Panc1 (cell line): ENCODE measurements at regions of chr5 and their contacts with region 1.

Region 1: GRCh38 chr5:54243473-54244080 is 66.8 kb downstream of the ARL15 start:
- DNase-seq: no peak
- ATAC-seq: no peak
- H3K4me3 ChIP-seq: no peak overlapping the region
- H3K27ac ChIP-seq: no peak overlapping the region
- H3K4me1 ChIP-seq: no peaks in the 10 kb centered on the region
- H3K27me3 ChIP-seq: no peaks in the 10 kb centered on the region
- CTCF ChIP-seq: peak; percentile 70; the same call in 1 of the 2 replicates

Region 2: DNA sequence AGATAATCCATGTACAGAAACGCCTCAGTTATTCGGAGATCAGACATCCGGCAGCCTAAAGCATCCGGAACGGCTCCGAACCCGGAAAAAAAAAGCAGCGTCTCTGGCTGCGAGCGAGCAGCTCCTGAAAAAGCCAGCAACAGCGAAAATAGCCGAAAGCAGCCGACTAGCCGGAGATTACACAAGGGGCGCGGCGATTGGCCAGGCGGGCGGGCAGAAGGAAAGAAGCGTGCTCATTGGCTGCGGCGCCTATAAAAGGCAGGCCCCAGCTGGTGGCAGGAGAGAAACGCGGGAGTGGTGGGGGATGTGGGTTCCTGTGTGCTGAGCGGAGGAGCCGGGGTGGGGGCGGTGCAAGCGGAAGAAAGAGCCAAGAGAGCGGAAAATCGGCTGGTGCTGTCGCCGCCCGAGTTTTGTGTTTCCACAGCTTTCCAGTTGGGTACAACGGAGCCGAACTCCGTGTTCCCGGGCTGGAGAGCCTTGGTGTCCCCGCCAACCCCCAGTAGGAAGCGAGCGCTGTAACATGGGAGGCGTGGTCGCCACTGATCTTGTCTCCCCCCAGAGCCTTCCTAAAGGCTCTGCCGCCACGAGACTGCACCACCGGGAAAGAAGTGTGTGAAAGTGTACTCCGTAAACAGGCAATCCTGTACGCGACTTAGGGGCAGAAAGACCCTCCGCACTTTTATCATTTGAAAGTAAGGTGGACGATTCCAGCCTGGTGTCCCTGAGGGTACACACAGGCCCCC is 67.0 kb after region 1 on chr5 and contains the start of gene ARL15:
- CTCF ChIA-PET with region 1: no interaction called
- POLR2A ChIA-PET with region 1: no interaction called
- in situ Hi-C with region 1: no loop called
- intact Hi-C with region 1: no loop called
- DNase-seq: peak; percentile 64
- ATAC-seq: peak; percentile 96
- H3K4me3 ChIP-seq: peak within 1 kb of the TSS; percentile 80 to 85
- H3K27ac ChIP-seq: peak within 1 kb of the TSS; percentile 84
- H3K4me1 ChIP-seq: peaks cover 13% of the 10 kb centered on the region
- H3K27me3 ChIP-seq: no peaks in the 10 kb centered on the region
- CTCF ChIP-seq: no peak
- total RNA-seq, gene ARL15: 16.5 TPM

Region 3: DNA sequence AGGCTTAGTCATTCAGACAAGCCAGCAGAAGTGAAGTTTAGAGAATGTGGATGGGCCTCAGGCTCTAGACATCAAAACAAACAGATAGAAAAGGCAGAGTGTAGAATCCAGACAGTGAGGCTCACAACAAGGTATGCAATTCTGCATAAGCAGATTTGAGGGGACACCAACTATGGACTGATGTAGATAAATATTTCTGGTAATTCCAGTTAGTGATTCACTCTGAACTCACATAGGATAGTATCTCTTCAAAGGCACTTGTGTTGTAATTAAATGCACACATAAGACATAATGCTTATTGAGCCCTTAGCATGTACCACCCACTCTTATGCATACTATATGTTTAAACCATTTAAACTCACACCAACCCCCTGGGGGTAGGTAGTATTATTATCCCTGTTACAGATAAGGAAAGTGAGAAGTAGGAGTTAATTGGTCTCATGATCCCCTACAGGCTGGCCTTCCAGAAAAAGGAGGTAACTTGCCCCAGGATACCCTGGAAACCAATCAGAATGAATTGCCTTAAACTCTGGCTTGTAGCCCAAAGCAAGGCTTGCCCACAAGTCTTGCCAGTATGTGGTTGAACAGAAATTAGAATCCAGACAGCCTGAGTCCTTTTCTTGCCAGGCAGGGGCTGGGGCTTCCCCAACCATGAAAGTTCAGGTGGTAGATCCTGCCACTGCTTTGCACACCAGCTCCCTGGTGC is 172.5 kb after region 1 on chr5:
- CTCF ChIA-PET with region 1: interaction called, 3 read pairs
- POLR2A ChIA-PET with region 1: no interaction called
- in situ Hi-C with region 1: no loop called
- intact Hi-C with region 1: loop called (anchors 5 kb)
- DNase-seq: no peak
- ATAC-seq: no peak
- H3K4me3 ChIP-seq: no peak overlapping the region
- H3K27ac ChIP-seq: no peak overlapping the region
- H3K4me1 ChIP-seq: no peaks in the 10 kb centered on the region
- H3K27me3 ChIP-seq: no peaks in the 10 kb centered on the region
- CTCF ChIP-seq: no peak

Region 4: GRCh38 chr5:54480296-54480695 is 236.7 kb after region 1 on chr5:
- CTCF ChIA-PET with region 1: no interaction called
- POLR2A ChIA-PET with region 1: no interaction called
- in situ Hi-C with region 1: no loop called
- intact Hi-C with region 1: loop called (anchors 5 kb)
- DNase-seq: no peak
- ATAC-seq: no peak
- H3K4me3 ChIP-seq: no peak overlapping the region
- H3K27ac ChIP-seq: no peak overlapping the region
- H3K4me1 ChIP-seq: no peaks in the 10 kb centered on the region
- H3K27me3 ChIP-seq: no peaks in the 10 kb centered on the region
- CTCF ChIP-seq: no peak

Region 5: GRCh38 chr5:55347786-55348185 is 1104.2 kb after region 1 on chr5:
- CTCF ChIA-PET with region 1: no interaction called
- POLR2A ChIA-PET with region 1: no interaction called
- in situ Hi-C with region 1: no loop called
- intact Hi-C with region 1: no loop called
- DNase-seq: no peak
- ATAC-seq: no peak
- H3K4me3 ChIP-seq: no peak overlapping the region
- H3K27ac ChIP-seq: no peak overlapping the region
- H3K4me1 ChIP-seq: no peaks in the 10 kb centered on the region
- H3K27me3 ChIP-seq: no peaks in the 10 kb centered on the region
- CTCF ChIP-seq: no peak